ENCODE measurements at regions of chr9 and their contacts with region 1.

Region 1: DNA sequence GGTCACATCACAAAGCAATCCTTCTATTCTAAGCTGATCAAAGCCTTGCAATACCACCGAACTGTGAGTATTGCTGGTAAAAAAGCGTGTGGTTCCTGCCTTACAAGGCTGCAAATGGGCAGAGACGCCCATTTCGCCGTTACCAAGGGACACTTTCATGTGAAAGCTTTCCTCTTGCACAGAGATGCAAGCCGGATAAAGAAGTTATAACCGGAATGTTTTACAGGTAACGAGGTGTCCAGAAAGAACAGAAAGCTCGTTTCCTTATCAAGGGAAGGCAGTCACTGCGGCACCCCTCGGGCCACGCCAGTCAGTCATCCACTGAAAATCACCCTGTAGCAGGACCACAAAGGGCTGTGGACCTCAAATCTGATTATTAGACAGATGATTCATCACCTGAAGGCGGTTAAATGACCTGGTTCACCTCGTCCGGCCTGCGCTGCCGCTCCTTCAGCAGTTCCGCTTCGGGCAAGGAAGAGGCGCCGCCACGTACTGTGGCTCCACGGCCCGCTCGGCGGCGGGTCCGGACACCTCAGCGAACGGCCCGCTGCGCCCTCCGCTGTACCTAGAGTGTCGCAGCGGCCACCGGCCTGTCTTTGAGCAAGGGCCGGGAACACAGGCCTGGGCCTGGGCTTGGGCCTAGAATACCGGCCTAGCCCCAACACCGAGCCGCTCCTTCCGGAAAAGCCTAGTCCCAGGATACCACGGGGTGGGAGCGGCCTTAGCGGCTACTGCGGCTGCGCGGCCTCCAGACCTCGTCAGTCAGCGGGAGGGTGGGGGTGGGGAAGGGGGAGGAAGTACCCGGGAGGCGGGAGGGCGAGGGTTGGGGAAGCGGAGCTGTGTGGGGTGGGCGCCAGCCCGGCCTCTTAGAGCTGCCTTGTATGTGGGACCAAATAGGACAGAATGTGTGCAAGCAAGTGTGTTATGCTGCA is at the start of gene KLHL9:
- DNase-seq: peak; percentile 72 to 87 (median 85)
- ATAC-seq: peak; percentile 94
- H3K4me3 ChIP-seq: peak within 1 kb of the TSS; percentile 96
- H3K4me3 Mint-ChIP-seq: peak within 1 kb of the TSS; percentile 90 to 97 (median 94)
- H3K27ac ChIP-seq: peak within 1 kb of the TSS; percentile 95
- H3K27ac Mint-ChIP-seq: peak within 1 kb of the TSS; percentile 90 to 98 (median 95)
- H3K4me1 ChIP-seq: peaks cover 15 to 35% of the 10 kb centered on the region in 2 donors
- H3K4me1 Mint-ChIP-seq: peaks cover 36 to 65% (median 60%) of the 10 kb centered on the region in 7 donors
- H3K27me3 ChIP-seq: no peaks in the 10 kb centered on the region
- H3K27me3 Mint-ChIP-seq: peaks cover 0 to 27% (median 0%) of the 10 kb centered on the region in 5 donors
- total RNA-seq, gene KLHL9: 11.8 to 37.7 (median 19.1) TPM

Region 2: DNA sequence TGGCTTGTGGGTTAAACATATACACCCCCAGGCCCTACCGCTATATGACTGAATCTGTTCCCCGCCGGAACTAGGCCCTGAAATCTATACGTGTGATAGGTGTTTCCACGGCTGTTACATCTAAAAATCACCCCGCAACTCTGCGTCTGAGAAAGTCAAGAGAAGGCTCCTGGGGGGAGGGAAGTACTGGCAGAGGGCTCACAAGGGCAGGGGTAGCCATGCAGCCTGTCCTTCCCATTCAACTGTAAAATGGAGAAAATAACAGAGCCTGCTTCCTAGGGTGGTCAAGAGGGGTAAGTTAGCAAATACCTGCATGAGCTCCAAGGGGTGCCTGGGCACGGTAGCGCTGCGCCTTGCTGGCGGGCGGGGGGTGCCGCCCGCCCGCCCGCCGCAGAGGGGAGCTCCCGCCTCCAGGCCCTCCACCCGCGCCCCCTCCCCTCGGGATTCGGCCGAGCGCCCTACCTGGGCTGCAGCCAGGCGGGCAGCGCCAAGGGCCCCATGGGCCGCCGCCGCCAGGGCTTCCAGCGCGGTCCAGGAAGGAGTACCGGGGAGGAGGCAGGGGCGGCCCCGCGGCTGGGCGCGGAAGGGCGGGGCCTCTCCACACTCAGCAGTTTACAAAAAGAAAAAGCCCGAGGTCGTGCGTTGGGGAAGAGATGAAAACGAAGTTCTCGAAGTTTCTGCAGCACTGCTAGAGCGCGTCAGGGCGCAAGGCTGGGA is 303.7 kb before region 1 on chr9 and contains the start of gene HACD4:
- CTCF ChIA-PET with region 1: no interaction called
- POLR2A ChIA-PET with region 1: no interaction called
- intact Hi-C with region 1: loop called in 1 of 2 experiments (anchors 10 kb)
- DNase-seq: peak; percentile 53 to 76 (median 73)
- ATAC-seq: peak; percentile 87
- H3K4me3 ChIP-seq: peak within 1 kb of the TSS; percentile 62
- H3K4me3 Mint-ChIP-seq: peak within 1 kb of the TSS in 7 of 10 donors; percentile 65 to 86 (median 76)
- H3K27ac ChIP-seq: peak within 1 kb of the TSS; percentile 78
- H3K27ac Mint-ChIP-seq: peak within 1 kb of the TSS in 7 of 9 donors; percentile 71 to 88 (median 81)
- H3K4me1 ChIP-seq: peaks cover 12 to 16% of the 10 kb centered on the region in 2 donors
- H3K4me1 Mint-ChIP-seq: peaks cover 13 to 42% (median 30%) of the 10 kb centered on the region in 7 donors
- H3K27me3 ChIP-seq: no peaks in the 10 kb centered on the region
- H3K27me3 Mint-ChIP-seq: no peaks in the 10 kb centered on the region
- total RNA-seq, gene HACD4: 9.3 to 15.2 (median 13.6) TPM

Region 3: DNA sequence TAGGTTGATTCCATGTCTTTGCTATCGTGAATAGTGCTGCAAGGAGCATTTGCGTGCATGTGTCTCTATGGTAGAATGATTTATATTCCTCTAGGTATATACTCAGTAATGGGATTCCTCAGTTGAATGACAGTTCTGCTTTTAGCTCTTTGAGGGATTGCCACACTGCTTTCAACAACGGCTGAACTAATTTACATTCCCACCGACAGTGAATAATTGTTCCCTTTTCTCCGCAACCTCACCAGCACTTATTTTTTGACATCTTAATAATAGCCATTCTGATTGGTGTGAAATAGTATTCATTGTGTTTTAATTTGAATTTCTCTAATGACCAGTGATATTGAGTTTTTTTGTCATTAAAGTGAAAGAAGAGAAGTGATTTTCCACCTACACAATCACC is 48.3 kb before region 1 on chr9:
- CTCF ChIA-PET with region 1: no interaction called
- POLR2A ChIA-PET with region 1: no interaction called
- intact Hi-C with region 1: no loop called
- DNase-seq: no peak
- ATAC-seq: peak; percentile 50
- H3K4me3 ChIP-seq: no peak overlapping the region
- H3K4me3 Mint-ChIP-seq: no peak overlapping the region
- H3K27ac ChIP-seq: no peak overlapping the region
- H3K27ac Mint-ChIP-seq: no peak overlapping the region
- H3K4me1 ChIP-seq: no peaks in the 10 kb centered on the region
- H3K4me1 Mint-ChIP-seq: no peaks in the 10 kb centered on the region
- H3K27me3 ChIP-seq: no peaks in the 10 kb centered on the region
- H3K27me3 Mint-ChIP-seq: peaks cover 13 to 36% (median 27%) of the 10 kb centered on the region in 5 donors

Region 4: GRCh38 chr9:21357479-21358460 is 22.8 kb after region 1 on chr9:
- CTCF ChIA-PET with region 1: no interaction called
- POLR2A ChIA-PET with region 1: interaction called, 12 read pairs
- intact Hi-C with region 1: loop called (anchors 1 kb)
- DNase-seq: peak in 6 of 9 donors; percentile 30 to 64 (median 48)
- ATAC-seq: peak; percentile 72
- H3K4me3 ChIP-seq: peak overlapping the region; percentile 18
- H3K4me3 Mint-ChIP-seq: peak overlapping the region; percentile 31 to 79 (median 72)
- H3K27ac ChIP-seq: peak overlapping the region; percentile 68
- H3K27ac Mint-ChIP-seq: peak overlapping the region; percentile 75 to 95 (median 88)
- H3K4me1 ChIP-seq: peaks cover 3 to 6% of the 10 kb centered on the region in 2 donors
- H3K4me1 Mint-ChIP-seq: peaks cover 4 to 27% (median 18%) of the 10 kb centered on the region in 7 donors
- H3K27me3 ChIP-seq: no peaks in the 10 kb centered on the region
- H3K27me3 Mint-ChIP-seq: peaks cover 0 to 67% (median 6%) of the 10 kb centered on the region in 5 donors

Region 5: DNA sequence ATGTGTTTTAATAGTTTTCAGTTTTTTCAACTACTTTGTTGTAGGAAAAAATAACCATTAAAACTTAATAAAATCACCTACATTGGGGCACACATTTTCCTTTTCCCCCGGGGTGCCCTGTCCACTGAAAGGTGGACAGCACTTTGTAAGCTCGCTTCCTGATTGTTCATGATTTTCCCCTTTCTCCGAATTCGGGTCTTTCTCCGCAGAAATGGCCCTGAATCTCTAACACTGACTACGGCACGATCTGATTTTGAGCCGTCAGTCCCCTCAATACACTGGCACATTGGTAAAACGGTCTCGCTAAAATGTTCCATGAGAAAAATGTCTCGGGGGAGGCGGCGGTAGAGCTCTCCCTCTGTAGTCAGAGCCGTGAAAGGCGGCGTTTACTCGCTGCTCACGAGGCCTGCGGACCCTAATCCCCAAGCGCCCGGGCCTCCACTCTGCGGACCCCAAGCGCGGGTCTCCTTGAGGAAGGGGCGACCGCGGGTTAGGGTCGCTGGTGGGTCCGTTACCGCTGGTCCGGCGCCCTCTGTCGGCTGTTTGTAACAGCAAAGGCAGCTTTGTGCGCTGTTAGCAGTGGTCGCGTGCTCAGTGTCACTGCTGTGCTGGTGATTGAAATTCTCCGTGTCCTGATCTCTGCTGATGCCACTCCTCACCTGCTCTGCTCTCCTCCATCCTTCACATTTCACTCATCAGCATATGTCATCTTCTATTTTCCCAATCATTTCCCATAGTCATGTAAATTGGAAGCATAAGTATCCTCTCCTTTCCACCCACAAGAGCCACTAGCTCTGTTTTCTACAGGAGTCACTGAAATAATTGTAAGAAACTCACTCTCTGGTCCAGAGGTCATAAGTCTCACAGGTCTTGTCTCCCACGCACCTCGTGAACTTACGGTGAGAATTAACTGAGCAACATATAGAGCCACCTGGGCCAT is 61.1 kb after region 1 on chr9:
- CTCF ChIA-PET with region 1: interaction called, 36 read pairs
- POLR2A ChIA-PET with region 1: interaction called, 3 read pairs
- intact Hi-C with region 1: loop called in 1 of 2 experiments (anchors 2 kb)
- DNase-seq: peak; percentile 35 to 65 (median 56)
- ATAC-seq: peak; percentile 83
- H3K4me3 ChIP-seq: peak overlapping the region; percentile 51
- H3K4me3 Mint-ChIP-seq: peak overlapping the region; percentile 39 to 81 (median 74)
- H3K27ac ChIP-seq: no peak overlapping the region
- H3K27ac Mint-ChIP-seq: peak overlapping the region in 1 of 9 donors; percentile 4
- H3K4me1 ChIP-seq: no peaks in the 10 kb centered on the region
- H3K4me1 Mint-ChIP-seq: peaks cover 5 to 13% (median 9%) of the 10 kb centered on the region in 7 donors
- H3K27me3 ChIP-seq: peaks cover 8 to 10% of the 10 kb centered on the region in 2 donors
- H3K27me3 Mint-ChIP-seq: peaks cover 52 to 84% (median 74%) of the 10 kb centered on the region in 5 donors

Region 6: DNA sequence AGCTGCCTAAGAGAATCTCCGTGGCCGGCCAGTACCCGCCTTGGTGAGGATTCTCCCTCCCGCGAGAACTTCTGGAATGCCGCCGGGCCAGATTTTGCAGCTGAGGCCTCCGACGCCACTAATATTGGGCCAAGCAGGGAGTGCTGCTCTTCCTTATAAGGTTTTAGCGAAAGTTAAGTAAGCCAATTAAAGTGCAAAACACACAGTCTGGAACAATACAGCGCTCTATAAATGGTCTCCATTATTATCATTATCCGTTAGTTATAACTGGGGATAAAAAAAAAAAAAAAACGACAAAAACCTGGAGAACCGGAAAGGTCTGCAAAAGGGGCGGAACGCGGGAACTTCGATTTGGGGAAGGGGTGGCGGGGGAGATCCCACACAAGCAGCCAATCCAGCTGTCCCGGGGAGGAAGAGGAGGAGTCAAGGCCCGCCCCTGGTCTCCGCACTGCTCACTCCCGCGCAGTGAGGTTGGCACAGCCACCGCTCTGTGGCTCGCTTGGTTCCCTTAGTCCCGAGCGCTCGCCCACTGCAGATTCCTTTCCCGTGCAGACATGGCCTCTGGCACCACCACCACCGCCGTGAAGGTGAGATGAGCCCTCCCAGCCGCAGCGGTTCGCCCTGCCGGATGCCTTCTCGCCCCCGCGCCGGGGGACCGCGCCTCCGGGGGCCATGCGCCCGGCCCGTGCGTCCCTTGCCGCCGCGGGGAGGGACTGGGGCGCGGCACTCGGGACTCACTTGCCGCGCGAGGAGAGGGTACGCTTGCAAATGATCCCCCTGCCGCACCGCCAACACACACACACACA is 467.4 kb after region 1 on chr9 and contains the start of gene MTAP:
- CTCF ChIA-PET with region 1: no interaction called
- POLR2A ChIA-PET with region 1: interaction called, 11 read pairs
- intact Hi-C with region 1: loop called in 1 of 2 experiments (anchors 1 kb)
- DNase-seq: peak in 7 of 9 donors; percentile 46 to 81 (median 72)
- ATAC-seq: peak; percentile 88
- H3K4me3 ChIP-seq: peak within 1 kb of the TSS; percentile 92
- H3K4me3 Mint-ChIP-seq: peak within 1 kb of the TSS; percentile 96 to 100 (median 99)
- H3K27ac ChIP-seq: peak within 1 kb of the TSS; percentile 69
- H3K27ac Mint-ChIP-seq: peak within 1 kb of the TSS; percentile 92 to 99 (median 96)
- H3K4me1 ChIP-seq: peaks cover 10 to 25% of the 10 kb centered on the region in 2 donors
- H3K4me1 Mint-ChIP-seq: peaks cover 24 to 52% (median 40%) of the 10 kb centered on the region in 7 donors
- H3K27me3 ChIP-seq: peaks cover 0 to 4% of the 10 kb centered on the region in 2 donors
- H3K27me3 Mint-ChIP-seq: peaks cover 0 to 46% (median 8%) of the 10 kb centered on the region in 5 donors
- total RNA-seq, gene MTAP: 29.0 to 50.7 (median 43.2) TPM